ENCODE measurements at regions of chr2 and their contacts with region 1.

Region 1: GRCh38 chr2:136423516-136423996 is 305.6 kb upstream of the CXCR4 start:
- DNase-seq: peak; percentile 63 to 87 (median 82)
- ATAC-seq: peak; percentile 97
- H3K4me3 ChIP-seq: peak overlapping the region; percentile 55 to 65
- H3K4me3 Mint-ChIP-seq: peak overlapping the region; percentile 84
- H3K27ac ChIP-seq: no peak overlapping the region
- H3K27ac Mint-ChIP-seq: peak overlapping the region; percentile 71
- H3K4me1 ChIP-seq: peaks cover 13% of the 10 kb centered on the region
- H3K4me1 Mint-ChIP-seq: peaks cover 17% of the 10 kb centered on the region
- H3K27me3 ChIP-seq: no peaks in the 10 kb centered on the region
- H3K27me3 Mint-ChIP-seq: peaks cover 31% of the 10 kb centered on the region
- CTCF ChIP-seq: peak; percentile 93

Region 2: DNA sequence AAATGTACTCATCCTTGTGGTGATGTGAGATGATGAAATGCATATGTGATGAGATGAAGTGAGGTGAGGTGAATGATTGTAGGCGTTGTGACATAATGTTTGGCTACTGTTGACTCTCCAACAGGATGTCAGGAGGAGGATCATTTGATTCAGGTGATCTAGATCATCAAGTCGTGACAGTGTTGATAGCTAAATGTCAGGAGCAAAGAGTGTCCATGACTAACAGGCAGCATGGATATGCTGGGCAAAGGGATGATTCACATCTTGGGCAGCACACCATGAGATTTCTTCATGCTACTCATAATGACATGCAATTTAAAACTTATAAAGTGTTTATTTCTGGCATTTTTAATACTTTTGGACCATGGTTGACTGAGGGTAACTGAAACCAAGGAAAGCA is 722.1 kb before region 1 on chr2:
- CTCF ChIA-PET with region 1: no interaction called
- POLR2A ChIA-PET with region 1: no interaction called
- intact Hi-C with region 1: no loop called
- DNase-seq: no peak
- ATAC-seq: no peak
- H3K4me3 ChIP-seq: no peak overlapping the region
- H3K4me3 Mint-ChIP-seq: no peak overlapping the region
- H3K27ac ChIP-seq: no peak overlapping the region
- H3K27ac Mint-ChIP-seq: no peak overlapping the region
- H3K4me1 ChIP-seq: no peaks in the 10 kb centered on the region
- H3K4me1 Mint-ChIP-seq: no peaks in the 10 kb centered on the region
- H3K27me3 ChIP-seq: no peaks in the 10 kb centered on the region
- H3K27me3 Mint-ChIP-seq: no peaks in the 10 kb centered on the region
- CTCF ChIP-seq: no peak

Region 3: GRCh38 chr2:136434251-136434715 is 10.7 kb after region 1 on chr2:
- CTCF ChIA-PET with region 1: interaction called, 17 read pairs
- POLR2A ChIA-PET with region 1: interaction called, 3 read pairs
- intact Hi-C with region 1: no loop called
- DNase-seq: no peak
- ATAC-seq: no peak
- H3K4me3 ChIP-seq: no peak overlapping the region
- H3K4me3 Mint-ChIP-seq: no peak overlapping the region
- H3K27ac ChIP-seq: no peak overlapping the region
- H3K27ac Mint-ChIP-seq: no peak overlapping the region
- H3K4me1 ChIP-seq: no peaks in the 10 kb centered on the region
- H3K4me1 Mint-ChIP-seq: no peaks in the 10 kb centered on the region
- H3K27me3 ChIP-seq: no peaks in the 10 kb centered on the region
- H3K27me3 Mint-ChIP-seq: peaks cover 4% of the 10 kb centered on the region
- CTCF ChIP-seq: no peak

Region 4: DNA sequence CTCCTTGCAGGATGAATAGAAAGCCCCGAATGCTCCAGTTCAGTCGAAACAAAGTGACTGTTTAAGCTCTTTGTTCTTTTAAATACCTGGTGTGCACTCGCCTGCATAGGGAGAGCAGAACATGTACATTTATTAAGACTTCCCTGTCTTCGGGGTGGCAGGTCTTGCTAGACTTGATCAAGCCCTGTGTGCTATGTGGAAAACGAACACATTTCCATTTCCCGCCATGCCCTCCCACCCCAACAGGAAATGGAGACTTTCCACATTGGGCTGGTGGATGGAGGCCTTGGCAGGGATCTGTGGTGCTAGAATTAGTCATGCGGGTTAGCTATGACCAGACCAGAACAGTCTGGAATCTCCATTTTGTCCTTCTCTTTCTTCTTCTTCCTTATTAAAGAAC is 20.8 kb after region 1 on chr2:
- CTCF ChIA-PET with region 1: interaction called, 12 read pairs
- POLR2A ChIA-PET with region 1: no interaction called
- intact Hi-C with region 1: no loop called
- DNase-seq: no peak
- ATAC-seq: no peak
- H3K4me3 ChIP-seq: no peak overlapping the region
- H3K4me3 Mint-ChIP-seq: no peak overlapping the region
- H3K27ac ChIP-seq: no peak overlapping the region
- H3K27ac Mint-ChIP-seq: no peak overlapping the region
- H3K4me1 ChIP-seq: no peaks in the 10 kb centered on the region
- H3K4me1 Mint-ChIP-seq: no peaks in the 10 kb centered on the region
- H3K27me3 ChIP-seq: peaks cover 0 to 3% of the 10 kb centered on the region in 2 experiments
- H3K27me3 Mint-ChIP-seq: peaks cover 14% of the 10 kb centered on the region
- CTCF ChIP-seq: no peak

Region 5: GRCh38 chr2:137838255-137839092 is 1414.9 kb after region 1 on chr2:
- CTCF ChIA-PET with region 1: interaction called, 13 read pairs
- POLR2A ChIA-PET with region 1: no interaction called
- intact Hi-C with region 1: loop called in 1 of 2 experiments (anchors 1 kb)
- DNase-seq: peak in 3 of 9 experiments; percentile 1 to 48 (median 34)
- ATAC-seq: no peak
- H3K4me3 ChIP-seq: no peak overlapping the region
- H3K4me3 Mint-ChIP-seq: no peak overlapping the region
- H3K27ac ChIP-seq: no peak overlapping the region
- H3K27ac Mint-ChIP-seq: no peak overlapping the region
- H3K4me1 ChIP-seq: no peaks in the 10 kb centered on the region
- H3K4me1 Mint-ChIP-seq: no peaks in the 10 kb centered on the region
- H3K27me3 ChIP-seq: no peaks in the 10 kb centered on the region
- H3K27me3 Mint-ChIP-seq: peaks cover 4% of the 10 kb centered on the region
- CTCF ChIP-seq: peak; percentile 70

Region 6: GRCh38 chr2:138373993-138374408 is 1950.4 kb after region 1 on chr2:
- CTCF ChIA-PET with region 1: no interaction called
- POLR2A ChIA-PET with region 1: no interaction called
- intact Hi-C with region 1: loop called in 1 of 2 experiments (anchors 10 kb)
- DNase-seq: no peak
- ATAC-seq: no peak
- H3K4me3 ChIP-seq: no peak overlapping the region
- H3K4me3 Mint-ChIP-seq: no peak overlapping the region
- H3K27ac ChIP-seq: no peak overlapping the region
- H3K27ac Mint-ChIP-seq: no peak overlapping the region
- H3K4me1 ChIP-seq: no peaks in the 10 kb centered on the region
- H3K4me1 Mint-ChIP-seq: no peaks in the 10 kb centered on the region
- H3K27me3 ChIP-seq: no peaks in the 10 kb centered on the region
- H3K27me3 Mint-ChIP-seq: no peaks in the 10 kb centered on the region
- CTCF ChIP-seq: no peak

Measured in CD8-positive, alpha-beta T cell (primary cell).